Activated B cell treated with CpG ODN at 0.5 μM for 24 hours (primary cell): ENCODE measurements at regions of chr11 and their contacts with region 1.

Region 1: GRCh38 chr11:1694064-1694845 is 2.7 kb upstream of the KRTAP5-6 start:
- DNase-seq: peak; percentile 81
- ATAC-seq: peak; percentile 91
- H3K4me3 Mint-ChIP-seq: no peak overlapping the region
- H3K27ac Mint-ChIP-seq: no peak overlapping the region
- H3K4me1 Mint-ChIP-seq: peaks cover 5% of the 10 kb centered on the region
- H3K27me3 Mint-ChIP-seq: peaks cover 22% of the 10 kb centered on the region
- CTCF ChIP-seq: no peak

Region 2: DNA sequence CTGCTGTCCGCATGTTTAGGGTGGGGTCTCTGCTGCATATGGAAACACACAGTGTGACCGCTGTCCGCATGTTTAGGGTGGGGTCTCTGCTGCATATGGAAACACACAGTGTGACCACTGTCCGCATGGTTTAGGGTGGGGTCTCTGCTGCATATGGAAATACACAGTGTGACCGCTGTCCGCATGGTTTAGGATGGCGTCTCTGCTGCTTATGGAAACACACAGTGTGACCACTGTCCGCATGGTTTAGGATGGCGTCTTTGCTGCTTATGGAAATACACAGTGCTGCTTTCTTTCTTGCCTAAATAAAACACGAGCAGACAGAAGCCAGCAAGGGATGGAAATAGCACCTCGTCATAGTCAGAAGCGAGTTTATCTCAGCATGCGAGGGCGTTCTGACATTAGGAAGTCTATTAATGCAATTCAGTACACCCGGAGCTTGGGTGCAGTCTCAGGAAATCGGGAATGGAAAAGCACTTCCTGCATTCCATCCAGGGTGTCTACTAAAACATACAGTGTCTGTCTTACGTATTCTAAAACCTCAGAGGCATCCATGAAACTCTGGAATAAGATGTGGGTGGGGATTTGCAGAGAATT is 352.2 kb before region 1 on chr11:
- CTCF ChIA-PET with region 1: no interaction called
- POLR2A ChIA-PET with region 1: no interaction called
- intact Hi-C with region 1: no loop called
- DNase-seq: no peak
- ATAC-seq: no peak
- H3K4me3 Mint-ChIP-seq: no peak overlapping the region
- H3K27ac Mint-ChIP-seq: no peak overlapping the region
- H3K4me1 Mint-ChIP-seq: peaks cover 5% of the 10 kb centered on the region
- H3K27me3 Mint-ChIP-seq: no peaks in the 10 kb centered on the region
- CTCF ChIP-seq: no peak

Region 3: GRCh38 chr11:1652771-1653540 is 41.3 kb before region 1 on chr11:
- CTCF ChIA-PET with region 1: interaction called, 24 read pairs
- POLR2A ChIA-PET with region 1: interaction called, 3 read pairs
- intact Hi-C with region 1: loop called (anchors 5 kb)
- DNase-seq: peak; percentile 74
- ATAC-seq: peak; percentile 91
- H3K4me3 Mint-ChIP-seq: no peak overlapping the region
- H3K27ac Mint-ChIP-seq: no peak overlapping the region
- H3K4me1 Mint-ChIP-seq: no peaks in the 10 kb centered on the region
- H3K27me3 Mint-ChIP-seq: peaks cover 24% of the 10 kb centered on the region
- CTCF ChIP-seq: peak; percentile 80

Region 4: DNA sequence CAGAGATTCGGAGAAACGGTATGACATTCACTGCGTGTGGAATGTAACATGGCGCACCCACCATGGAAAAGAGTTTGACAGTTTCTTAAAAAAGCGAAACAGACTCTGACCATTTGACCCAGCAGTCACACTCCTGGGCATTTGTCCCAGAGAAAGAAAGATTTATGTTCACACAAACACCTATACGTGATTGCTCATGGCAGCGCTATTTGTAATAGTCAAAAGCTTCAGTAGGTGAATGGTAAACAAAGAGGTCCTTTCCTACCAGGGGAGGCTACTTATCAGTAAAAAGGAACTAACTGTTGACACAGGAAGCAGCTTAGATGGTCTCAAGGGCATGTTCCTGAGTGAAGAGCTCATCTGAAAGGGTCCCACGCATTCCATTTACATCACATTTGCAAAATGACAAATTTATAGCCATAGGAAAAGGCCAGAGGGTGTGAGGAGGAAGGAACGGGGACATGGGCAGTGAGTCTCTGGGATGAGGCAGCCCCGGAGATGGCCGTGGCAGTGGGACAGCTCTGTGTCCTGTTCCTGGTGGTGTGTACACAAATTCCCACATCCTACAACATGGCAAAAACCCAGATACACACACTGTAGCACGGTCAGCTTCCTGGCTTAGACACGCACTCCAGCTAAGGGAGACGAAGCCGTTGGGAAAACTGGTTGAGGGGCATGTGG is 11.9 kb before region 1 on chr11:
- CTCF ChIA-PET with region 1: interaction called, 11 read pairs
- POLR2A ChIA-PET with region 1: no interaction called
- intact Hi-C with region 1: no loop called
- DNase-seq: no peak
- ATAC-seq: no peak
- H3K4me3 Mint-ChIP-seq: no peak overlapping the region
- H3K27ac Mint-ChIP-seq: no peak overlapping the region
- H3K4me1 Mint-ChIP-seq: no peaks in the 10 kb centered on the region
- H3K27me3 Mint-ChIP-seq: peaks cover 7% of the 10 kb centered on the region
- CTCF ChIP-seq: no peak

Region 5: GRCh38 chr11:1706634-1707400 is 12.6 kb after region 1 on chr11:
- CTCF ChIA-PET with region 1: interaction called, 17 read pairs
- POLR2A ChIA-PET with region 1: no interaction called
- intact Hi-C with region 1: no loop called
- DNase-seq: no peak
- ATAC-seq: peak; percentile 34
- H3K4me3 Mint-ChIP-seq: no peak overlapping the region
- H3K27ac Mint-ChIP-seq: peak overlapping the region; percentile 50
- H3K4me1 Mint-ChIP-seq: peaks cover 30% of the 10 kb centered on the region
- H3K27me3 Mint-ChIP-seq: peaks cover 11% of the 10 kb centered on the region
- CTCF ChIP-seq: no peak

Region 6: GRCh38 chr11:2002807-2003206 is 308.6 kb after region 1 on chr11:
- CTCF ChIA-PET with region 1: interaction called, 114 read pairs
- POLR2A ChIA-PET with region 1: interaction called, 10 read pairs
- intact Hi-C with region 1: no loop called
- DNase-seq: no peak
- ATAC-seq: peak; percentile 31
- H3K4me3 Mint-ChIP-seq: no peak overlapping the region
- H3K27ac Mint-ChIP-seq: no peak overlapping the region
- H3K4me1 Mint-ChIP-seq: no peaks in the 10 kb centered on the region
- H3K27me3 Mint-ChIP-seq: no peaks in the 10 kb centered on the region
- CTCF ChIP-seq: no peak